AG04449 (cell line): ENCODE measurements at regions of chr6 and their contacts with region 1.

Region 1: DNA sequence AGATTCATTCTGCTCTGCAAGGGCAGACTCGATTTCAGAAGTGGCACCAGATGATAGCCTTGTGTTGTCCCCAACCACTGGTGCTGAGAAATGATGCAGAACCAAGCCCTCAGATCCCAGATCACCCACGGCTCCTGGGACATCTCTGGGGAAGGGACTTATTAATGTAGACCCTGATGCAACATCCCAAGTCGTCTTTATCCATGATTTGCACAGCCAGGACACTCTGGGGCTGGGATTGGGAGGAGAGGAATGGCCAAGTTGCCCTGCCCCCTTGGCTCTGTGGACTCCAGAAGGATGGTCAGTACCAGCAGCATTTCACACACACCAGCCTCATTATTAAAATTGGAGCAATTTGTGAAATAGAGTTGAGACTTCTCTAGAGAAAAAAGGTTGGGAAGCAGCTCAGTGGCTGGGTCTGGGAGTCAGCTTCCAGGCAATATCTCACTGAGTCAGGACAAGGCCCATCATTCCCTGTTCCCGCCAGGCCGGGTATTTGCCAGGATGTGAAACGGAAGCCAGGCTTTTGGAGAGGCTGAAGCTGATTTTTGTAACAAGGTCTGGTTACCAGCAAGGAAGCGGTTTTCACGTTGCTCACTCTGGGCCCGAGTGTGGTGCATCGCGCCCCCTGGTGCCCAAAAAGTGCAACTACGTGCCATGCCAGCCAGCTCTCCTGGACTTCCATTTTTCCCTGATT is 67.4 kb downstream of the ZBTB2 start:
- DNase-seq: peak; percentile 71
- H3K4me3 ChIP-seq: no peak overlapping the region
- CTCF ChIP-seq: peak; percentile 96

Region 2: GRCh38 chr6:150977281-150977680 is 346.7 kb before region 1 on chr6:
- CTCF ChIA-PET with region 1: interaction called, 20 read pairs
- POLR2A ChIA-PET with region 1: no interaction called
- DNase-seq: no peak
- H3K4me3 ChIP-seq: no peak overlapping the region
- CTCF ChIP-seq: no peak

Region 3: DNA sequence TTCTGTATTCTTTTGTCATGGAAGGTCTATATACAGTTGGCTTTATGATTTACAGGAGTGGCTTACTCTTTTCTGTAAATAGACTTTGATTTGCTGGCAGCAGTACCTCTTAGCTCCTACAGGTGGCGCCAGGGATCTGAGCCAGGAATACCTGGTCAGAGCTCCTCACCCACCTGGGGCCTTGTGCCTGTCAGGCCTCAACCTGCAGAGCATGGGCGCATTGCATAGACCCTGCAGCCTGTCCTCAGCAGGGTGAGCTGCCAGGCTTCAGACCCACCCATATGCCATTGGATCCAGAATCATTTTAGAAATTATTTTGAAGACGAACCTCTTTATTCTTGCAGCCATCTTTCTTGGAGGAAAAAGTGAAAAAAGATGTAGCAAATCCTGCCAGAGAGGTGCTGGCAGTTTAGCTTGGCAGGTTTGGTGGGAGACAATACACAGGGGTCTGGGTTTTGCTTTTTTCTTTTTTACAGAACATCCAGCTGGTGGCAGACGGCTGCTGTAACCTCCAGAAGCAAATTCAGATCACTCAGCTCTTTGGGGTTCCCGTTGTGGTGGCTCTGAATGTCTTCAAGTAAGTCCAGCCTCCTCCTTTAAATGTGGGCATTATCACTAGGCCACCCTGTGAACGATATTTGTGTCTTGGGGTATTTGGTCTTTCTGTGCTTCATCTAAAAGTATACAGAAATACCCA is 309.4 kb before region 1 on chr6:
- CTCF ChIA-PET with region 1: interaction called, 573 read pairs
- POLR2A ChIA-PET with region 1: interaction called, 5 read pairs
- DNase-seq: no peak
- H3K4me3 ChIP-seq: no peak overlapping the region; the same call in 1 of the 2 replicates
- CTCF ChIP-seq: peak; percentile 79

Region 4: GRCh38 chr6:151098166-151098565 is 225.8 kb before region 1 on chr6:
- CTCF ChIA-PET with region 1: interaction called, 19 read pairs
- POLR2A ChIA-PET with region 1: no interaction called
- DNase-seq: no peak
- H3K4me3 ChIP-seq: no peak overlapping the region
- CTCF ChIP-seq: no peak

Region 5: GRCh38 chr6:151130329-151130728 is 193.6 kb before region 1 on chr6:
- CTCF ChIA-PET with region 1: no interaction called
- POLR2A ChIA-PET with region 1: no interaction called
- DNase-seq: no peak
- H3K4me3 ChIP-seq: no peak overlapping the region
- CTCF ChIP-seq: no peak

Region 6: DNA sequence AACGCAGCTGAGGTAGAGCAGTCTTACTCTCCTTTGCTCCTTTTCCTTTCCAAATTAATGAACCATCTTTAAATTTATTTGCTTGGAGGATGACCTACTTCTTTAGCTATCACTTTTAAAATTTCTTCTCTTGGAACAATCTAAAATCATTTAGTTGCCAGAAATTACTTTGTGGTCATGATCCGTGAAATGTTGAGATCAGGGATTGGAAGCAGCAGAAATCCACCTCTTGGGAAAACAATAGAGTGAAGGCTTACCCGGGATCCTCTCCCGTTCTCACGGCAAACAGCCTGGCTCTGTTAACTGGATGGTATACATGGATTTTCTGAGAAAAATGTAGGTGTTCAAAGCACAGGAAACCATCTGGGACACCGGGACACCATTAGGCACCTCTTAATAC is 76.4 kb before region 1 on chr6:
- CTCF ChIA-PET with region 1: interaction called, 19 read pairs
- POLR2A ChIA-PET with region 1: no interaction called
- DNase-seq: no peak
- H3K4me3 ChIP-seq: no peak overlapping the region
- CTCF ChIP-seq: no peak

Region 7: GRCh38 chr6:151340219-151340978 is 16.5 kb after region 1 on chr6:
- CTCF ChIA-PET with region 1: interaction called, 49 read pairs
- POLR2A ChIA-PET with region 1: no interaction called
- DNase-seq: no peak
- H3K4me3 ChIP-seq: no peak overlapping the region
- CTCF ChIP-seq: no peak

Region 8: GRCh38 chr6:151391366-151392037 is 67.6 kb after region 1 on chr6 and contains the start of gene ZBTB2:
- CTCF ChIA-PET with region 1: no interaction called
- POLR2A ChIA-PET with region 1: no interaction called
- DNase-seq: no peak
- H3K4me3 ChIP-seq: peak within 1 kb of the TSS; percentile 79
- CTCF ChIP-seq: no peak